CD8-positive, alpha-beta T cell (primary cell): ENCODE measurements at regions of chr6 and their contacts with region 1.

Region 1: DNA sequence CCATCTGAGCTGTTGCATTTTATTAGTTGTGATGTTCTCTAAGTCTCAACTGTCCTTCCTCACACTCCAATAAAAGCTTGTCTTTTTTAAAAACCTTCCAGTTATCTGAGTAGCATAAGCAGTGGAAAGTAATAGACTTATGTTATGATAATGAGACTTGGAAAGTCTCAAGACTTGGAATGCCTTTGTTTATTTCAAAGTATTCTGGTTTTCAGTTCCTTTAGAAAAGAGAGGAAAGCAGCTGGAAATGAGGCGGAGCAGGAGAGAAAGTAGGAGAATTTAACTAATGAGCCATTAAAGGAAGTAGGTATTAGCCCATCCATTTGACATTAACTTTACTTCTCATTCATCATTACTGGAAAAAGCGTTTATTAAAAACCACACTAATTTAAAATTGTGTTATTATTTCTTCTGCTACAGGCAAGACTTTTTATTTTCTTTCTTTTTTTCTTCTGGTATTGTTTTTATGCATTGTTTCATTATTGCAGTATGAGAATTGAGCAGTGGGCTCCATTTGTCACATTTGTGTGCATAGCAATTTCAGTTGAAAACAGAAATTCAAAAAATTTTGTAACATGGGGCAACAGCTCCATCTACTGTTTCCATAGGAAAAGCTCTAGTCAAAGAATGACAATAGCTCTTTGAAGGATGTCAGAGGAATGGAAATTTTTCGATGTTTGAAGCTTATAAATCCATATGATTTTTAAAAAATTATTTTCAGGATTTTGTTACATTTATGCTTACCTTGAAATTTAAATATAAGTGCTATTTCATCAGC is 194.8 kb downstream of the COL9A1 start:
- DNase-seq: peak in 2 of 9 experiments; percentile 37 to 46
- ATAC-seq: no peak
- H3K4me3 ChIP-seq: no peak overlapping the region
- H3K4me3 Mint-ChIP-seq: no peak overlapping the region
- H3K27ac ChIP-seq: no peak overlapping the region
- H3K27ac Mint-ChIP-seq: no peak overlapping the region
- H3K4me1 ChIP-seq: no peaks in the 10 kb centered on the region
- H3K4me1 Mint-ChIP-seq: no peaks in the 10 kb centered on the region
- H3K27me3 ChIP-seq: no peaks in the 10 kb centered on the region
- H3K27me3 Mint-ChIP-seq: peaks cover 10% of the 10 kb centered on the region
- CTCF ChIP-seq: peak; percentile 87

Region 2: DNA sequence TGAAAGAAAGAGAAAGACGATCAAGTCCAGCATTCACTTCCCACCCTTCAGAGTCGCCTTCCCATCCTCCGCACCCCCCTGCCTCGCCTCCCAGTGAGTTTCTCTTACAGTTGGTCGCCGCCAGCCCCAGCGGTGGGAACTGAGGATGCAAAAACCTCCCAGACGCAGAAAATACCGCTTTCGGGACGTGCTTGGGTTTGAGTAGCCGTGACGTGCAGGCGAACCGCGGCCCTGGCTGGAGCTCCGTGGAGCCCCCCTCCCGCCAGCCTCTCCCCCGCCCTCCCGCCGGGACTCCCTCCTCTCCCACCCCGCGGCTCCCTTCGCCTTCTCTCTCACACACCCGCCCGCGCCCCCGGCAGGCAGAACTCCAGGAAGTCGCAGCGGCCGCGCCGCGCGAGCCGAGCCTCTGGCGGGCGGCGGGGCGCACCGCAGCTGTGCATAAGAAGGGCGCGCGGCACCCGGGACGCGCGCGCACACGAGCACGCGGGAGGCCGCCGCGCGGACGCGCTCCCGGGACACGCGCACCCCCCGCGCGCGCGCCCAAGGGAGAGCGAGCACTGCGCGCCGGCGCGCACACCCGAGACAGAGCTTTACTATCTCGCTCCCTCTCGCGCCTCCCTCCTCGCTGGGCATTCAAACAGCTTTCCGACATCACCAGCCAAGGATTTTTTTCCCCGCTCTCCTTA is 1473.2 kb before region 1 on chr6 and contains the start of gene ADGRB3:
- CTCF ChIA-PET with region 1: no interaction called
- POLR2A ChIA-PET with region 1: no interaction called
- intact Hi-C with region 1: loop called (anchors 5 to 10 kb)
- DNase-seq: peak in 5 of 9 experiments; percentile 1 to 48 (median 20)
- ATAC-seq: peak; percentile 31
- H3K4me3 ChIP-seq: peak within 1 kb of the TSS; percentile 15 to 28
- H3K4me3 Mint-ChIP-seq: peak within 1 kb of the TSS; percentile 79
- H3K27ac ChIP-seq: no peak within 1 kb of the TSS
- H3K27ac Mint-ChIP-seq: no peak within 1 kb of the TSS
- H3K4me1 ChIP-seq: peaks cover 4% of the 10 kb centered on the region
- H3K4me1 Mint-ChIP-seq: peaks cover 20% of the 10 kb centered on the region
- H3K27me3 ChIP-seq: peaks cover 2 to 5% of the 10 kb centered on the region in 2 experiments
- H3K27me3 Mint-ChIP-seq: peaks cover 41% of the 10 kb centered on the region
- CTCF ChIP-seq: no peak
- total RNA-seq, gene ADGRB3: not detected

Region 3: GRCh38 chr6:68876792-68877493 is 1231.1 kb before region 1 on chr6:
- CTCF ChIA-PET with region 1: no interaction called
- POLR2A ChIA-PET with region 1: no interaction called
- intact Hi-C with region 1: loop called in 1 of 2 experiments (anchors 10 kb)
- DNase-seq: no peak
- ATAC-seq: no peak
- H3K4me3 ChIP-seq: no peak overlapping the region
- H3K4me3 Mint-ChIP-seq: no peak overlapping the region
- H3K27ac ChIP-seq: no peak overlapping the region
- H3K27ac Mint-ChIP-seq: no peak overlapping the region
- H3K4me1 ChIP-seq: no peaks in the 10 kb centered on the region
- H3K4me1 Mint-ChIP-seq: no peaks in the 10 kb centered on the region
- H3K27me3 ChIP-seq: no peaks in the 10 kb centered on the region
- H3K27me3 Mint-ChIP-seq: no peaks in the 10 kb centered on the region
- CTCF ChIP-seq: no peak

Region 4: GRCh38 chr6:69732640-69733039 is 375.4 kb before region 1 on chr6:
- CTCF ChIA-PET with region 1: interaction called, 3 read pairs
- POLR2A ChIA-PET with region 1: no interaction called
- intact Hi-C with region 1: loop called (anchors 2 to 5 kb)
- DNase-seq: peak in 2 of 9 experiments; percentile 15 to 30
- ATAC-seq: no peak
- H3K4me3 ChIP-seq: no peak overlapping the region
- H3K4me3 Mint-ChIP-seq: no peak overlapping the region
- H3K27ac ChIP-seq: no peak overlapping the region
- H3K27ac Mint-ChIP-seq: no peak overlapping the region
- H3K4me1 ChIP-seq: no peaks in the 10 kb centered on the region
- H3K4me1 Mint-ChIP-seq: no peaks in the 10 kb centered on the region
- H3K27me3 ChIP-seq: no peaks in the 10 kb centered on the region
- H3K27me3 Mint-ChIP-seq: no peaks in the 10 kb centered on the region
- CTCF ChIP-seq: peak; percentile 26

Region 5: GRCh38 chr6:69835414-69836179 is 272.4 kb before region 1 on chr6:
- CTCF ChIA-PET with region 1: no interaction called
- POLR2A ChIA-PET with region 1: no interaction called
- intact Hi-C with region 1: loop called (anchors 1 kb)
- DNase-seq: peak in 2 of 9 experiments; percentile 54 to 64
- ATAC-seq: peak; percentile 75
- H3K4me3 ChIP-seq: no peak overlapping the region
- H3K4me3 Mint-ChIP-seq: no peak overlapping the region
- H3K27ac ChIP-seq: no peak overlapping the region
- H3K27ac Mint-ChIP-seq: no peak overlapping the region
- H3K4me1 ChIP-seq: no peaks in the 10 kb centered on the region
- H3K4me1 Mint-ChIP-seq: peaks cover 5% of the 10 kb centered on the region
- H3K27me3 ChIP-seq: peaks cover 0 to 3% of the 10 kb centered on the region in 2 experiments
- H3K27me3 Mint-ChIP-seq: peaks cover 13% of the 10 kb centered on the region
- CTCF ChIP-seq: peak; percentile 85

Region 6: DNA sequence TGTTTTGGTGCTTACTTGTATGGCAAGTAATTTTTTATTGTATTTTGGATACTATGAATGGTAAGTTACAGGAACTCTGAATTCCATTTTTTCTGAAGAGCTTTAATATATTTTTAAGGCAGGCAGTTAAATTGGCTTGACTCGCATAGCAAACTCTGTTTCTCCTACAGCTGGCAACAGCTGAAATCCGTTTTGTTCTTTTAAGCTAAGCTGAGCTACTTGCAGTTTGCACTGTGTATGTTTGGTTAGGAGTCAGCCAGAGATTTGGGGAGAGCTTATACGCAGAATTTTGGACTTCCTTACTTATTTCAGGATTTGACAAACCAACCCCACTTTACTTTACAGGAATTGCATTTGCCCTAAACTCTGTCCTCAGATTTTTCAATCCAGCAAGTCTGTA is 62.6 kb before region 1 on chr6:
- CTCF ChIA-PET with region 1: no interaction called
- POLR2A ChIA-PET with region 1: no interaction called
- intact Hi-C with region 1: no loop called
- DNase-seq: no peak
- ATAC-seq: no peak
- H3K4me3 ChIP-seq: no peak overlapping the region
- H3K4me3 Mint-ChIP-seq: no peak overlapping the region
- H3K27ac ChIP-seq: no peak overlapping the region
- H3K27ac Mint-ChIP-seq: no peak overlapping the region
- H3K4me1 ChIP-seq: no peaks in the 10 kb centered on the region
- H3K4me1 Mint-ChIP-seq: no peaks in the 10 kb centered on the region
- H3K27me3 ChIP-seq: no peaks in the 10 kb centered on the region
- H3K27me3 Mint-ChIP-seq: no peaks in the 10 kb centered on the region
- CTCF ChIP-seq: no peak

Region 7: GRCh38 chr6:70210462-70210861 is 102.4 kb after region 1 on chr6:
- CTCF ChIA-PET with region 1: no interaction called
- POLR2A ChIA-PET with region 1: no interaction called
- intact Hi-C with region 1: no loop called
- DNase-seq: no peak
- ATAC-seq: no peak
- H3K4me3 ChIP-seq: no peak overlapping the region
- H3K4me3 Mint-ChIP-seq: no peak overlapping the region
- H3K27ac ChIP-seq: no peak overlapping the region
- H3K27ac Mint-ChIP-seq: no peak overlapping the region
- H3K4me1 ChIP-seq: no peaks in the 10 kb centered on the region
- H3K4me1 Mint-ChIP-seq: no peaks in the 10 kb centered on the region
- H3K27me3 ChIP-seq: peaks cover 0 to under 1% of the 10 kb centered on the region in 2 experiments
- H3K27me3 Mint-ChIP-seq: peaks cover 6% of the 10 kb centered on the region
- CTCF ChIP-seq: no peak